Left ventricle myocardium inferior (tissue), 1 donor: ENCODE measurements at regions of chr3 and their contacts with region 1.

Region 1: GRCh38 chr3:126134219-126134975 is 46.0 kb downstream of the ALDH1L1 start:
- DNase-seq: peak; percentile 63
- H3K4me3 ChIP-seq: no peak overlapping the region
- H3K27ac ChIP-seq: no peak overlapping the region
- H3K4me1 ChIP-seq: peaks cover 5% of the 10 kb centered on the region
- H3K27me3 ChIP-seq: peaks cover 6% of the 10 kb centered on the region
- CTCF ChIP-seq: peak; percentile 88

Region 2: DNA sequence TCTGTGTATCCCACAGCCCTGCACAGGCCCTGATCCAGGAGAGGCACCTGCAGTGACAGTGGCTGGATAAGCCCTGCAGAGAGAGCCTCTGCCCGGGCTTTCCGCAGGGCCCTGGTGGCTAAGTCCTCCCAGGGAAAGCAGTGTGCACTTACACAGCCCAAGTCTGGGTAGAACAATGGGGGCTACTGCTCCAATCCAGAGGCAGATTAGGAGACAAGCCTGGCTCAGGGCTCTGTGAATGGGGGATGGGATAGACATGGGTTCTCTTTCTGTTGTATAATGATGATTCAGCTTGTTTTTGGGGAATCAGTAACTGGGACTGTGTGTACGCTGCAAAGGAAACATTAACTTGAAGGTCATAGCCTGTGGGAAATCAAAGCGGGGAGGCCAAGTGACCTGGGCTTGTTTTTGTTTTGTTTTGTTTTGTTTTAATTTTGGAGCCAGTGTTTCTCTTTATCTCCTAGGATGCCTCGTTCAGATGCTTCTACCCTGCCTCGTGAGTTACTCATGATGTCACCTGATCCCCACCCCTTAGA is 50.1 kb after region 1 on chr3:
- intact Hi-C with region 1: no loop called
- DNase-seq: no peak
- H3K4me3 ChIP-seq: no peak overlapping the region
- H3K27ac ChIP-seq: no peak overlapping the region
- H3K4me1 ChIP-seq: peaks cover 21% of the 10 kb centered on the region
- H3K27me3 ChIP-seq: peaks cover 15% of the 10 kb centered on the region
- CTCF ChIP-seq: no peak

Region 3: GRCh38 chr3:126197854-126198584 is 63.6 kb after region 1 on chr3:
- intact Hi-C with region 1: loop called (anchors 10 kb)
- DNase-seq: peak; percentile 54
- H3K4me3 ChIP-seq: no peak overlapping the region
- H3K27ac ChIP-seq: peak overlapping the region; percentile 58
- H3K4me1 ChIP-seq: no peaks in the 10 kb centered on the region
- H3K27me3 ChIP-seq: no peaks in the 10 kb centered on the region
- CTCF ChIP-seq: peak; percentile 84

Region 4: DNA sequence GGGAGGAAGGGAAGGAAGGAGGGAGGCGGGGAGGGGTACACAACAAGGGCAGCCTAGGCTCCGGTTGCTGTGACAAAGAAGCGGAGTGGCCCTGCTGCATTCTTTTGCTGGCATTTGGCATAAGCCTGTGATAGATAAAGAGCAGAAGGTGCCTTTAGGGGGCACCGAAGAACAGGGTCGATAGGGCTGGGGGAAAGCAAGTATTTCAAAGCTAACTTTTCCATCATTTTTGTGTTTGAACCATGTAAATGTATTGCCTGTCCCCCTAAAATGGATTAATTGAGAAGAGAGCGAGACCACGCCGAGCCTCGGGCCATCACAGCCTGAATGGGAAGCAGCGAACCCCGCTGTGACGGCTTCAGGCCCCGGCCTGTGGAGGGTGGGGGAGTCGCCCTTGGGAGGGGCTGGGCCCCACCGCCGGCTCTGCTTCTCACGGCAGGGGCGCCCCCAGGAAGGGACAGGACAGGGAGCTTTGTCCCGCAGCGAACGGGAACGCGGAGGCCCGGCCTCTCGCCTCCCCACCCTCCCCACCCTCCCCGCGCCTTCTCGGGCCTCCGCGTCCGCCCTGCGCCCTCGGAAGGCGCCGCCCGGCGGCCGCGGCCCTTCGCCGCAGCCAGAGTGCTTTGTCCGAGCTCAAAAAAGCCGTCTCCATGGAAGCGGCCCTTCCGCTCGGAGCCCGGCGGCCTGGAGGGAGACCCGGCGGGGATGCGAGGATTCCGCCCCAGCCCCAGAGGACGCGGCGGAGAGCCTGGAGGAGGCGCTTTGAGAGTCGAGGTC is 78.4 kb after region 1 on chr3:
- intact Hi-C with region 1: no loop called
- DNase-seq: peak; percentile 59
- H3K4me3 ChIP-seq: peak overlapping the region; percentile 73
- H3K27ac ChIP-seq: peak overlapping the region; percentile 78
- H3K4me1 ChIP-seq: peaks cover 38% of the 10 kb centered on the region
- H3K27me3 ChIP-seq: peaks cover 28% of the 10 kb centered on the region
- CTCF ChIP-seq: peak; percentile 65

Region 5: GRCh38 chr3:126357295-126358037 is 223.1 kb after region 1 on chr3 and contains the start of gene KLF15:
- intact Hi-C with region 1: no loop called
- DNase-seq: peak; percentile 89
- H3K4me3 ChIP-seq: peak within 1 kb of the TSS; percentile 87
- H3K27ac ChIP-seq: peak within 1 kb of the TSS; percentile 97
- H3K4me1 ChIP-seq: peaks cover 57% of the 10 kb centered on the region
- H3K27me3 ChIP-seq: peaks cover 13% of the 10 kb centered on the region
- CTCF ChIP-seq: no peak
- total RNA-seq, gene KLF15: 44.6 TPM

Region 6: DNA sequence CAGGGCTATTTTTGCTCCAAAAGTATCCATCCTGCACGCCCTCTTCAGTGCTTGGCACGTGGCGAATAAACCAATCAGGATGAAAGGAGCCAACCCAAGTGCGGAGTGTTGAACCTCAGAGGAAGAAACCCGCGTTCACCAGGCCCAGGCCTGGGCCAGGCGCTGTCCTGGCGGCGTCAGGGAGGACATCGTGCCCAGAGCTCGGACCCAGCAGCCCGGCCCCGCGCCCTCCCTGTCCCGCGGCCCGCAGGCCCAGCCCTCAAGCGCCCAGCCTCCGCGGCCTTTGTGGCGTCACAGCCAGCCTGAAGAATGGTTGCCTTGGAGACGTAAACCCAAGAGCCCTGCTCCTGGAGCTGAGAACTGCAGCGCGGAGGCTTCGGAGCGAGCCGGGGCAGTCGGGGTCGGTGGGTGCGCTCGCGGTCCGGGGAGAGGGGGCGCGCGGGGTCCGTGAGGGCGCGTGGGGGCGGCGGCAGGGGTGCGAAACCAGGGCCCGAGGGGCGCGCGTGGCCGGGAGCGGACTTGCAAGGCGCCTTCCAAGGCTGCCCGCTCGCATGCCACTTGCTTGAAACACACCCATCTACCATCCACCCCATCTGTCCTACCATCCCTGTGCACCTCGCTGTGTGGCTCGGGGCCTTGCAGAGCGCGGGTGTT is 260.3 kb after region 1 on chr3 and contains the start of gene CFAP100:
- intact Hi-C with region 1: loop called (anchors 10 kb)
- DNase-seq: no peak
- H3K4me3 ChIP-seq: peak within 1 kb of the TSS; percentile 57
- H3K27ac ChIP-seq: no peak within 1 kb of the TSS
- H3K4me1 ChIP-seq: peaks cover 10% of the 10 kb centered on the region
- H3K27me3 ChIP-seq: peaks cover 36% of the 10 kb centered on the region
- CTCF ChIP-seq: no peak
- total RNA-seq, gene CFAP100: not detected